Dorsolateral prefrontal cortex (tissue), 120 donors: ENCODE measurements at regions of chr21 and their contacts with region 1.

Region 1: DNA sequence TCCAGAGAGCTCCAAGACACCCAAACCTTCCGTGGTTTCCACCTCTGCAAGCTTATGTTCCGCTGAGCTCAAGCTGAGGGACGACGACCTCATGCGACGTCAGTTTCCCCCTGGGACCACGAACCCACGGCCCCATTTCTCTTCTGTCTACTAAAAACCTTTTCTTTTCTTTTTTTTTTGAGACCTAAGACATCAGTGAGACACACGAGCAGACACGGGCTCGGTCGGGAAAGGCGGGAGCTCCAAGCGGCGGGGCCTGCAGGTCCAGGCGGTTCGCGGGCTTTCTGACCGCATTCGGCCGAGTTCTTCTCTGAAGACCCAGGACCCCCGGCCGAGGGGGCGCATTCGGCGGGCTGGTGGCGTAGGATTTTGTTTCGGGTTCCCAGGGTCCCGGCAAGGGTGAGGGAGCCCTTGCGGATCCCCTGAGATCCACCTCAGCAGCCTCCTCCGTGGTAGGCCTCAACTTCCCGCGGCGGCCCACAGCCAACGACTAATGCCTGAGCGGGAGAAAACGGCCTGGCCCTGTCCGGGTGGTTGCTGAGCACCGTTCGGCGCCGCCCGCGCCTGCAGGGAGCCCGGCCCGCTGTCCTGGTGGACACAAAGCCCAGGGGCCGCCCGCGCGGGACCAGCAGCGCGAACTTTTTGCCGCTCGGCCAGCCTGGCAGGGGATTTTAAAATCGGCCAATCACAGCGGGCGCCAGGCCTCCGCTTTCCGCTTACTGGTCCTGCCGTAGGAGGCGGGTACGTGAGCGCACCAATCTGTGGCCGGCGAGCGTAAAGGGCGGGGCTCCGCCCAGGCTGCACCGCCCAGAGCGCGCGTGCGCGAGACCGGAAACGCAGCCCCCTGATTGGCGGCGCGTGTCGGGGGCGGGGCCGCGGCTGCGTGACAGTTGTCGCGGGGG is at the start of gene C21orf58:
- DNase-seq: peak; percentile 96 to 99 (median 98)
- H3K4me3 ChIP-seq: peak within 1 kb of the TSS; percentile 78 to 100 (median 99)
- H3K27ac ChIP-seq: peak within 1 kb of the TSS; percentile 83 to 100 (median 98)
- H3K27me3 ChIP-seq: no peaks in the 10 kb centered on the region
- CTCF ChIP-seq: peak in 10 of 56 donors; percentile 8 to 38 (median 18)
- total RNA-seq, gene C21orf58: 2.4 to 11.8 (median 5.4) TPM

Region 2: GRCh38 chr21:46126309-46127265 is 196.9 kb before region 1 on chr21:
- intact Hi-C with region 1: no loop called
- DNase-seq: peak in 7 of 10 donors; percentile 2 to 38 (median 25)
- H3K4me3 ChIP-seq: no peak overlapping the region
- H3K27ac ChIP-seq: no peak overlapping the region
- H3K27me3 ChIP-seq: no peaks in the 10 kb centered on the region
- CTCF ChIP-seq: no peak

Region 3: GRCh38 chr21:46243960-46244361 is 79.5 kb before region 1 on chr21:
- intact Hi-C with region 1: no loop called
- DNase-seq: peak in 1 of 10 donors; percentile 67
- H3K4me3 ChIP-seq: no peak overlapping the region
- H3K27ac ChIP-seq: peak overlapping the region in 33 of 59 donors; percentile 8 to 89 (median 77)
- H3K27me3 ChIP-seq: no peaks in the 10 kb centered on the region
- CTCF ChIP-seq: no peak

Region 4: DNA sequence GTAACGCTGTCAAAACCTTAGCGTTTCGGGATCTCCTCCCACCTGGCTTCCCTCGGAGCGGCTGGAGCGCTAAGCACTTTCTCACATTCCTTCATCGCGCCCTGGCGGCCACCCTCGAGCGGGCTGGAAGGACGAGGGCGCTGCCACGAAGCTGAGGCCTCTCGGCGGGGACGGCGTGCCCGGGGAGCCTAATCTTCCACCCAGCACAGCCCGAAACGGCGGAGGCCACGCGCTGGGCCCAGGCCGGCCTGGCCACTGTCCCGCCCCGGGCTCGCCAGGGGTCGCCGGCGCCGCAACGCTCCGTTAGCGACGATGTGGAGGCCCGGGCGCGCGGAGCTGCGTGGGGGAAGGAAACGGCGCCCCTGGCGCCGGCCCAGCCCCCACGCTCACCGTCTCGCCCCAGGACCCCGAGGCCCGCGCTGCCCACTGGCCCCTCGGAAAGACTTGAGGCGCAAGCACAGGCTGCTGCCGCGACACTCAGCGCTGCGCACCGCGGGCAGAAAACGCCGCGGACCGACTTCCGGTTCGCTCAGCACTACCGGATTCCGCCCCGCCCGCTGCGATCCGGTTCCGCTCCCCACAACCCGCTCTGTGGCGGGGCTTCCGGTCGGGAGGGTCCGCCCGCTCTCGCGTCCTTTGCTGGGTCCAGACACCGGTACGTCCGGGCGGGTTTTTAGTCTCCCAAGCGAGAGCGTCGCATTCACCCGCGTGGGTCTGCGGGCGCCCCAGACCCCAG is 37.5 kb before region 1 on chr21 and contains the start of gene YBEY:
- intact Hi-C with region 1: loop called (anchors 1 kb)
- DNase-seq: peak; percentile 76 to 93 (median 88)
- H3K4me3 ChIP-seq: peak within 1 kb of the TSS; percentile 61 to 98 (median 86)
- H3K27ac ChIP-seq: peak within 1 kb of the TSS; percentile 74 to 98 (median 95)
- H3K27me3 ChIP-seq: no peaks in the 10 kb centered on the region
- CTCF ChIP-seq: peak in 48 of 56 donors; percentile 9 to 66 (median 34)
- total RNA-seq, gene YBEY: 4.9 to 22.3 (median 13.5) TPM

Region 5: DNA sequence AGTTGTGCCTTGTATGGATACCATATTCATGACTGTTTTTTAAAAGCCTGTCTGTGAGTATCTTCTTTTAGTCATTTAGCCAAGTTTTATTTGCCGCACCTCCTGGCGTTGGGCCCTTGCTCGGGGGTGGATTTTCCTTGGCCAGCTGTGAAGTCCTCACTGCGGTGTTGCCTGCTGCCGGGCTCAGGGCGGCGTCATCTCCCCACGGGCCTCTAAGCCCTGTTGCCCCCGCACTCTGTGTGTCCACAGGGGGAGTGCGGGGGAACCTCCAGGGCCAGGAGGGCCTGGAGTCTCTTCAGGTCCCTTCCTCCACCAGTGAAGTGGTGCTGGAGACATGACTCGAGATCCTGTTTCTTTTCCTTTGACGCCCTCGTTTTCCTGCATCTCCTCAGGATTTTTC is 69.4 kb after region 1 on chr21:
- intact Hi-C with region 1: loop called in 1 of 2 experiments (anchors 5 kb)
- DNase-seq: peak in 7 of 10 donors; percentile 36 to 80 (median 67)
- H3K4me3 ChIP-seq: no peak overlapping the region
- H3K27ac ChIP-seq: peak overlapping the region in 42 of 59 donors; percentile 16 to 86 (median 70)
- H3K27me3 ChIP-seq: no peaks in the 10 kb centered on the region
- CTCF ChIP-seq: no peak

Region 6: GRCh38 chr21:46458315-46459023 is 135.0 kb after region 1 on chr21 and contains the start of gene DIP2A:
- intact Hi-C with region 1: loop called (anchors 1 to 2 kb)
- DNase-seq: peak; percentile 89 to 97 (median 94)
- H3K4me3 ChIP-seq: peak within 1 kb of the TSS; percentile 69 to 100 (median 95)
- H3K27ac ChIP-seq: peak within 1 kb of the TSS; percentile 76 to 97 (median 94)
- H3K27me3 ChIP-seq: no peaks in the 10 kb centered on the region
- CTCF ChIP-seq: peak in 37 of 56 donors; percentile 7 to 57 (median 32)
- total RNA-seq, gene DIP2A: 39.7 to 104 (median 66.4) TPM